CD4-positive, alpha-beta memory T cell (primary cell): ENCODE measurements at regions of chr1 and their contacts with region 1.

Region 1: DNA sequence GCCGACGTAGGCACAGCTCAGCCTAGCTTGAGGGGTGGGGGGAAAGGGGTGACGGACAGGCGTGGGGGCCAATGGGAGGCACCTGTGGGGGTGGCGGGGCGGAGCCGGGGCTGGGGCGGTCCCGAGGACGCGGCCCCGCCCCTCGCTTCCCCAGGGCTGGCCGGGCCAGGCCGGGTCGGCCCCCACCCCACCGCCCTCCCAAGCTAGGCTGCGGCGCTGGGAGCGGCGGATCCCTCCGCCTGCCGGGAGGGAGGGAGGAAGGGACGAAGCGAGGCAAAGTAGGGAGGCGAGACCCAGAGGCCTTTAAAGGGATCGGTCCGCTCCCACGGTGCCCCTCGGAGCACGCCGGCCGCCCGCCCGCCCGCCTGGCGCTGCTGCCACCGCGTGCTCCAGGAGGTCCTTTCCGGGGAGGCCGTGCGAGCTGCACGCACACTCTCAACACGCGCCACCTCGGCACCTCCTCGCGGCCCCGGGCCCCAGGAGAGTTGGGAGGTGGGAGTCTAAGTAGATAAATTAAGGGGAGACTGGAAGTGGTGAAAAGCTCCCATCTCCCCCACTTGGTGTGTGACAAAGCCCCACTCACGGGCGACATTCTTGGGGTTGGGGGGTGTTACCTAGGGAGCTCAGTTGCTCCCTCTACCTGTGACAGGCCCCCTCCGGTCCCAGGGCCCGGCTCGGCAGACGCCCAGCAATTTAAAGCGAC is 373 bp upstream of the MEF2D start:
- DNase-seq: peak; percentile 91 to 96 (median 93)
- H3K4me3 ChIP-seq: peak overlapping the region; percentile 79 to 85
- H3K4me3 Mint-ChIP-seq: peak overlapping the region; percentile 90 to 98 (median 94)
- H3K27ac ChIP-seq: peak overlapping the region; percentile 94
- H3K27ac Mint-ChIP-seq: peak overlapping the region; percentile 96 to 100 (median 99)
- H3K4me1 ChIP-seq: peaks cover 78% of the 10 kb centered on the region
- H3K4me1 Mint-ChIP-seq: peaks cover 63 to 83% (median 71%) of the 10 kb centered on the region in 4 donors
- H3K27me3 ChIP-seq: no peaks in the 10 kb centered on the region
- H3K27me3 Mint-ChIP-seq: peaks cover 0 to 2% of the 10 kb centered on the region in 2 donors

Region 2: DNA sequence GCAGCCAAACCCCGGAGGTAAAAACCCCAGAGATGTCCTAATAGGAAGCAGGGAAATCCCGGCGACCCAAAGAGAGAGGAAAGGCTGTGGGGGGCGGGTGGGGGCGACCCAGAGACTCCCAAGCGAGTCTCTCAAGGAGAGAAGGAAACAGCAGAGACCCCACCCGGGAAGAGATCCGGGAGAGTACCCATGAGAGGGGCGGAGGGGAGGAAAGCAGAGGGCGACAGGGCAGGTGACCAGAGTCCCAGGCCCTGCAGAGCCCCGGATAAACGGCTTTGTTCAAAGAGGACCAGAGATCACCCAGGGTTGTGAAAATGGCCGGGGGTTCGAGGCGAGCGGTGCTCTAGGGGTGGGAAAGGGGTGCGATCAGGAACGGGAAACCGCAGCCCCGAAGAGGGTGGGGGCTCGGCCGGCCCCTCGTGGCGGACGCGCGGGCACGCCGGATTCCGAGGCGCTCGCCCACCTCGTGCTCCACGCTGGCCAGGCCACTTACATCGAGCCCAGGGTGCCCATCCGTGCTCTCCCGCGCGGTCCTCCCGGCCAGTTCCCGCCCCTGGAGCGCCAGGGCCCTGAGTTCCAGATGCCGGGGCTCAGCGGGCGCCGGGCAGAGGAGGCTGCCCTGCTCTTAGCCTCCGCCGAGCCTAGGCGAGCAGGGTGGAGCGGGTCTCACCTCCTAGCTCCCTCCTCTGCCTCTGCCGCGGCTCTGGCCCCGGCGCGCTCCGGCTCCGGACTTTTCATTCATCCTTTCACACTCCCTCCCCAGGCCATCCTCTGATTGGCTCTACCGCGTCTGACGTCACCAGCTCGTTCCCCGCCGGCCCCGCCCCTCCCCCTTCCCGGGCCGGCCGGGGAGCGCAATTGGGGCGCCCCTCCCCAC is 79.6 kb before region 1 on chr1:
- CTCF ChIA-PET with region 1: no interaction called
- POLR2A ChIA-PET with region 1: no interaction called
- intact Hi-C with region 1: loop called (anchors 1 kb)
- DNase-seq: peak; percentile 54 to 70 (median 63)
- H3K4me3 ChIP-seq: peak overlapping the region; percentile 23 to 71
- H3K4me3 Mint-ChIP-seq: peak overlapping the region; percentile 88 to 99 (median 90)
- H3K27ac ChIP-seq: no peak overlapping the region
- H3K27ac Mint-ChIP-seq: peak overlapping the region; percentile 17 to 83 (median 52)
- H3K4me1 ChIP-seq: peaks cover 33% of the 10 kb centered on the region
- H3K4me1 Mint-ChIP-seq: peaks cover 13 to 37% (median 23%) of the 10 kb centered on the region in 4 donors
- H3K27me3 ChIP-seq: peaks cover 47% of the 10 kb centered on the region
- H3K27me3 Mint-ChIP-seq: peaks cover 31 to 43% of the 10 kb centered on the region in 2 donors

Region 3: DNA sequence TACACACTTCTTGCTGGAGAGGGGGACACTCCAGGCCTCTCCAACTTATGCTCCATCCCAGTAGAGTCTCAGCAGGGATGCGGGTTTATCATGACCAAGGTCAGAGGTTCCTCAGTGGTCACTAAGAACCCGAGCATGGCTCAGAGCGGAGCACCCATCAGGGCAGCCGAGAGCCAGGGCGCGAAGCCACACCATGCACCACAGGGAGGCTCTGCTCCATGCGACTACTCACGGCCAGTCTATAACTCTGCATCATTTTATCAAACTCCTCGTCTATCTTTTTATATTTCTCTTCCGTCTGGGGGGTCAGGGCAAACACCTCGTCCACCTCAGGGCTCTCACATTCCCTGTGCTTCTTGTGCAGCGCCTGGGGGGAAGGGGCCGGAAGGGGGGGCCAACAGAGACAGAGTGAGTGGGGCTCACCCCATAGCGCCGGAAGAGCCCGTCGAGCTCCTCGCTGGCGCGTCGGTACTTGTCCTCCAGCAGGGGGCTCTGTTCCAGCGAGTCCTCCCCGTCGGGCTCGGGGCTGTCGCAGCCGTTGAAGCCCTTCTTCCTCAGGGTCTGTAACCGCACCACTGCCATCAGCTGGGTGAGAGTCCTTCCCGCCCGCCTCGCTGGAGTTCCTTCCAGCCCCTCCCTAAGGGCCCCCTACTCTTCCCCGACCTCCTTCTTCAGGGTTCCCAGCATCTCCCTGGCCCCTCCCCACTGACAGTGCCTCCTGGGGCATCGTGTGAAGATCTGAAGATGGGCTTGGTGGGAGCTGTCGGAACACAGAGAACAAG is 20.3 kb before region 1 on chr1:
- CTCF ChIA-PET with region 1: interaction called, 257 read pairs
- POLR2A ChIA-PET with region 1: interaction called, 376 read pairs
- intact Hi-C with region 1: loop called (anchors 1 kb)
- DNase-seq: peak; percentile 77 to 81 (median 80)
- H3K4me3 ChIP-seq: no peak overlapping the region
- H3K4me3 Mint-ChIP-seq: peak overlapping the region in 6 of 8 donors; percentile 33 to 58 (median 46)
- H3K27ac ChIP-seq: peak overlapping the region; percentile 42
- H3K27ac Mint-ChIP-seq: peak overlapping the region; percentile 75 to 97 (median 92)
- H3K4me1 ChIP-seq: peaks cover 47% of the 10 kb centered on the region
- H3K4me1 Mint-ChIP-seq: peaks cover 31 to 53% (median 44%) of the 10 kb centered on the region in 4 donors
- H3K27me3 ChIP-seq: no peaks in the 10 kb centered on the region
- H3K27me3 Mint-ChIP-seq: no peaks in the 10 kb centered on the region

Region 4: DNA sequence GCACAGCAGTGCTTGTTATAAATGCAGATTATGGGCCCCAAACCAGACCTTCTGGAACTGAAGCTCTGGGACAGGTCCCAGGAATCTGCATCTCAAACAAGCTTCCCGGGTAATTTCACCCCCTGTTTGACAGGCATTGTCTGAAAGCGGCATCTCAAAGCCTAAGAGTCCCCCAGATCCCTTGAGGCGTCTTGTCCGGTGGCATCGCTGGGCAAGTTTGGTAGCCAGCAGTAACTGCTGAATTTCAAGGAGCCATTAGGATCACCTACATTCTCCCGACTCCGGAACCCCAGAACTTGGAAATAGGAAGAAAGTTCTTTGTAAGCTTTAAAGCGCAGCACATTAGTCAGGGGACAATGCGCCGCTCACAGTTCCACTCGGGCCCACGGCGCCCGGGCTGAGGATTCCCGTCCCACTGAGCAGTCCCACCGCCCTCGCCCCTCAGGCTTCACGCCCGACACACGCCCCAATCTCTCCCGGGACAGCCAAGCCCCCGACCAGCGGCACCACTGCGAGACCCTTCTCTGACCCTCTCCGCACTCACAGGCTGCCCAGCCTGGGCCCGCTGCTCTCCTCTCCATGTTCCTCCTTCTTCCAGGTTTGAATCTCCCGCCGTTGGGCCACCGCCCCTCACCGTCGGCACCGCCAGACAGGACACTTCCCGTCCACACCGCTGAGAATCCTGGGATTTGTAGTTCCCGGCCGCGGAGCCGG is 71.2 kb after region 1 on chr1 and contains the start of gene IQGAP3:
- CTCF ChIA-PET with region 1: interaction called, 7 read pairs
- POLR2A ChIA-PET with region 1: interaction called, 10 read pairs
- intact Hi-C with region 1: loop called (anchors 1 kb)
- DNase-seq: peak; percentile 61 to 81 (median 70)
- H3K4me3 ChIP-seq: peak within 1 kb of the TSS in 1 of 2 donors; percentile 13
- H3K4me3 Mint-ChIP-seq: peak within 1 kb of the TSS; percentile 76 to 91 (median 84)
- H3K27ac ChIP-seq: no peak within 1 kb of the TSS
- H3K27ac Mint-ChIP-seq: peak within 1 kb of the TSS in 5 of 7 donors; percentile 4 to 85 (median 43)
- H3K4me1 ChIP-seq: peaks cover 11% of the 10 kb centered on the region
- H3K4me1 Mint-ChIP-seq: peaks cover 3 to 14% (median 11%) of the 10 kb centered on the region in 4 donors
- H3K27me3 ChIP-seq: peaks cover 9% of the 10 kb centered on the region
- H3K27me3 Mint-ChIP-seq: peaks cover 27 to 38% of the 10 kb centered on the region in 2 donors
- total RNA-seq, gene IQGAP3: not detected

Region 5: GRCh38 chr1:156652992-156653355 is 152.0 kb after region 1 on chr1:
- CTCF ChIA-PET with region 1: no interaction called
- POLR2A ChIA-PET with region 1: no interaction called
- intact Hi-C with region 1: no loop called
- DNase-seq: no peak
- H3K4me3 ChIP-seq: no peak overlapping the region
- H3K4me3 Mint-ChIP-seq: no peak overlapping the region
- H3K27ac ChIP-seq: no peak overlapping the region
- H3K27ac Mint-ChIP-seq: peak overlapping the region in 1 of 7 donors; percentile 30
- H3K4me1 ChIP-seq: peaks cover 17% of the 10 kb centered on the region
- H3K4me1 Mint-ChIP-seq: peaks cover 7 to 31% (median 16%) of the 10 kb centered on the region in 4 donors
- H3K27me3 ChIP-seq: peaks cover 19% of the 10 kb centered on the region
- H3K27me3 Mint-ChIP-seq: peaks cover 52 to 64% of the 10 kb centered on the region in 2 donors

Region 6: DNA sequence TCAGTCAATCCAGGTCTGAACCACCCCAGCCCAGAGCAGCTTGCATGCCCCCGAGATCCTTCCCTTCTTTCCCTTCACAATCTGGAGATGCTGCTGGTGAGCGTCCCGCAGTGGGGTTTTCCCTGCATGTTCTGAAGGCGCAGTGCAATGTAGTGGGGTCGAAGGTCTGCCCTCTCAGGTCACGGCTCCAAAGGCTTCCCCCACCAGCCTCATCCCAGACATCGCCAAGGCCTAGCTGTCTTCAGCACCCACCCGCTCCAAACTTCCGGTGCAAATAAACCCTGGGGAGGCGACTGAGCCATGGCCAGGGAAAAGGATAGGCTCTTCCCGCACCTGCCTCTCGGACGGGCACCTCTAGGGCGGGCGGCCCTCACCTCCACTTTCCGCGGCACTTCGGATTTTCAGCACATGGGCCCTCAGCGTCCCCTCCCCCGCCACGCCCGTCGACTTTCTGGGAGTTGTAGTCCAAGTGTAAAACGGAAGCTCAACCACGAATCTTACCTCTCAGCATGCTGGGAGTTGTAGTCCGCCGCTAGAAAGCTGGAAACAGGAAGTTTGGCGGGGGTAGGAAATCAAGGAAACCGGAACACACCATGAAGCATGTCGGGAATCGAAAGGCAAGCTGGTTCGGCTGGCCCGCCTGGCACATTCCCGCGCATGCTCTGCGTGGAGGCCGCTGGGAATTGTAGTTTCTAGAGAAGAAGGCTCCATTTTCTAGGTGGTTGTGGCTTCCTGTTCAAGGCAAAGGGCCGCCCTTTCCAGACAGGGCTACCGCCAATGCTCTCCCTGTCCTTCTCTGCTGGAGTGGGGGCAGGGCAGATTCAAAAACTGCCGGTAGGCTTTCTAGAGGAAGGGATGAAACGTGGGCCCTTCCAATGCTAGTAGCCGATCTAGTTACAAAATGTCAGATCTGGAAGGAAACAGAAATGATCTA is 240.0 kb after region 1 on chr1 and contains the start of gene MRPL24:
- CTCF ChIA-PET with region 1: no interaction called
- POLR2A ChIA-PET with region 1: interaction called, 10 read pairs
- intact Hi-C with region 1: no loop called
- DNase-seq: peak; percentile 96 to 100 (median 99)
- H3K4me3 ChIP-seq: peak within 1 kb of the TSS; percentile 83 to 89
- H3K4me3 Mint-ChIP-seq: peak within 1 kb of the TSS; percentile 94 to 99 (median 96)
- H3K27ac ChIP-seq: peak within 1 kb of the TSS; percentile 84
- H3K27ac Mint-ChIP-seq: peak within 1 kb of the TSS; percentile 91 to 100 (median 98)
- H3K4me1 ChIP-seq: peaks cover 25% of the 10 kb centered on the region
- H3K4me1 Mint-ChIP-seq: peaks cover 18 to 45% (median 32%) of the 10 kb centered on the region in 4 donors
- H3K27me3 ChIP-seq: no peaks in the 10 kb centered on the region
- H3K27me3 Mint-ChIP-seq: no peaks in the 10 kb centered on the region
- total RNA-seq, gene MRPL24: 44.1 to 47.4 TPM